ENCODE measurements at regions of chr11 and their contacts with region 1.

Region 1: DNA sequence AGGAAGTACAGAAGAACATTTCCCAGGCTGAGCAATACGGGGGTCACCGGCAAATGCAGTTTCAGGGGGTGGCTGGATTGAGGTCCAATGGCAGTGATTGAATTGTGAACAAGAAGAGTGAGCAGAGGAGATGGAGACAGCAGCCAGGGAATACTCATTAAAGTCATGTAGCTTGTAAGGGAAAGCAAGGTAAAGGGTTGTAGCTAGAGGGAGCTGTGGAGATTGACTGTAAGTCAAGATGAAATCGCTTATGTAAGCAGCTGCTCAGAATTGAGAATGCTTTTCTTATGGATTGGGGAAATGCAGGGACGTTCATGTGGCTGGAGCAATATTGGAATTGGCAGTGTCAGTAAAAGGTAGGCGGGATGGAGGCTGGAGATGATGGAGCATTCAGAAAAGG is 111.4 kb upstream of the TBCEL start:
- H3K4me3 ChIP-seq: no peak overlapping the region
- H3K27ac ChIP-seq: no peak overlapping the region
- H3K4me1 ChIP-seq: no peaks in the 10 kb centered on the region
- CTCF ChIP-seq: peak; percentile 37; the same call in 1 of the 2 replicates

Region 2: DNA sequence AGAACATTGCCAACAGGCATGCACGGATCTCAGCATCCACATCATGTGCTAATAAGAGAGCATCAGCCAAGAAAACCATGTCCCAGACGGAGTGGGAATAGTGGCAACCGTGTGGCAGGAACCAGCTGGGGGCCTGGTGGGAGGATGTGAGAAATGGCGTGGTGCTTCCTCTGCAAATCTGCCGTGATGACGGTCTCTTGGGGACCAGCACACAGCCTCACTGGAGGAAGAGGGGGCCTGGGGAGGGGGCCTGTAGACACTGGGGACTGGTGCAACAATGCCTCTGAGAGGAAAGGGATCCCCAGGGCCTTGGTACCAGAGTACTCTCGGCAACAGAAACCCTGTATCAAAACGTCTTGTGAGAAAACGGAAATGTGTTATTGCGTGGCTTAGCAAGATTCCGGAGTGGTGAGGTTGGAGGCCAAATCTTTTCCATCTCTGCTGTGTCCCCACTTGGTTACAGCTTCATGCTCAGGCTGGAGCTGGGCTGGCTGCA is 42.9 kb before region 1 on chr11:
- CTCF ChIA-PET with region 1: no interaction called
- POLR2A ChIA-PET with region 1: no interaction called
- H3K4me3 ChIP-seq: no peak overlapping the region
- H3K27ac ChIP-seq: no peak overlapping the region
- H3K4me1 ChIP-seq: no peaks in the 10 kb centered on the region
- CTCF ChIP-seq: no peak

Region 3: DNA sequence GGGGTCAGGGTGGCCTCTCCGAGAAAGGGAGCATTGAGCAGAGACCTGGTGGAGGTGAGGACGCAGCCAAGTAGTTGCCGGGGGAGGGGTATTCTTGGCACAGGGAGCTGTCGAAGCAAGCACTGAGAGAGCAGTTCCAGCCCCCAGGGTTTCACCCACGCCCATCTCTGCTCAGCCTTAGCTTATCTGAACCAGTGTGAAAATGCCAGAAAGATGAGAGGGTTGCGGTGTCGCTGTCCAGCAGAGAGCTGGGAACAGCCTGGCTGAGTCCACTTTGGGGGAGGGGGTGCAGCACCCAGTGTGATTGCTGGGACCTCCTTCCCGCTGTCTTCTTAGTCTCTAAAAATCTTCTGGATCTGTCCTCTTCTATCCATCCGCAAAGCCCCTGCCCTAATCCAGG is 11.9 kb before region 1 on chr11:
- CTCF ChIA-PET with region 1: interaction called, 14 read pairs
- POLR2A ChIA-PET with region 1: no interaction called
- H3K4me3 ChIP-seq: no peak overlapping the region
- H3K27ac ChIP-seq: no peak overlapping the region
- H3K4me1 ChIP-seq: no peaks in the 10 kb centered on the region
- CTCF ChIP-seq: no peak

Region 4: GRCh38 chr11:121188776-121189175 is 276.3 kb after region 1 on chr11:
- CTCF ChIA-PET with region 1: no interaction called
- POLR2A ChIA-PET with region 1: no interaction called
- H3K4me3 ChIP-seq: no peak overlapping the region
- H3K27ac ChIP-seq: no peak overlapping the region
- H3K4me1 ChIP-seq: no peaks in the 10 kb centered on the region
- CTCF ChIP-seq: no peak